Activated CD4-positive, alpha-beta T cell treated with anti-CD3 and anti-CD28 coated beads, Interleukin-2, amount 10 ng/mL, durations not matched to agents 24 days and 14 days (primary cell): ENCODE measurements at regions of chr7 and their contacts with region 1.

Region 1: DNA sequence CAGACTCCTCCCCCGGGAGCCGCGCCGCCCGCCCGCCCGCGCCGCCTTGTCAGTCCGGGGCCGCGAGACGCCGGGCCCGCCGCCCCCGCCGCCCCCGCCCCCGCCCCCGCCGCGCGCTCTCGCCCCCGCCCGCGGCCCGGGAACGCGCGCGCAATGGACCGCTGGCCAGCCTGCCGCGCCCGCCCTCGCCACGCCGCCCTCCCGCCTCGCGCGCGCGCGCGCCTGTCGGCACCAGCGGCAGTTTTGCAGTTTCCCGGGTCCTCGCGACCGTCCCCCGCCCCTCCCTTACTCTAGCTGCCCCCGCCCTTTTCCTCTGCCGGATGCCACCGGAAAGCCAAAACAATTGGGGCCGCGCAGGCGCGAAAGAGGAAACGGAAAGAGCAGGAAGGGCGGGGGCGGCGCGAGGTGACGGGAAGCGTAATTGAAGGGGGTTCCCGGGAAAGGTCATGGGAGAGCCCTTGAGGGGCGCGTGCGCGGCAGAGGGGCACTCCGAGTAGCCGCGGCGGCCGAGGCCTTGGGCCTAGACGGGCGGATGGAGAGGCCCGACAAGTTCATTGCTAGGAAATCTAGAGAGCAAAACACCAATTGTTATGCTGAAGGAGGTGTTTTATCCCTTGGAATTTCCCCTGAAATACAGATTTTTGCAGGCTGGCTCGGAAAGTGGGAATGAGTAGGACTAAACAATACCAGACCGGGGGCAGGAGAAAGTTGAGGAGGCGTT is 400 bp upstream of the KBTBD2 start:
- DNase-seq: peak; percentile 99
- H3K4me3 Mint-ChIP-seq: peak overlapping the region; percentile 93
- H3K27ac Mint-ChIP-seq: peak overlapping the region; percentile 99
- H3K4me1 Mint-ChIP-seq: peaks cover 51% of the 10 kb centered on the region
- H3K27me3 Mint-ChIP-seq: peaks cover 2% of the 10 kb centered on the region

Region 2: GRCh38 chr7:32142649-32143048 is 749.3 kb before region 1 on chr7:
- intact Hi-C with region 1: no loop called
- DNase-seq: no peak
- H3K4me3 Mint-ChIP-seq: no peak overlapping the region
- H3K27ac Mint-ChIP-seq: no peak overlapping the region
- H3K4me1 Mint-ChIP-seq: no peaks in the 10 kb centered on the region
- H3K27me3 Mint-ChIP-seq: no peaks in the 10 kb centered on the region

Region 3: GRCh38 chr7:32259931-32260596 is 631.9 kb before region 1 on chr7:
- intact Hi-C with region 1: no loop called
- DNase-seq: no peak
- H3K4me3 Mint-ChIP-seq: no peak overlapping the region
- H3K27ac Mint-ChIP-seq: no peak overlapping the region
- H3K4me1 Mint-ChIP-seq: no peaks in the 10 kb centered on the region
- H3K27me3 Mint-ChIP-seq: no peaks in the 10 kb centered on the region

Region 4: DNA sequence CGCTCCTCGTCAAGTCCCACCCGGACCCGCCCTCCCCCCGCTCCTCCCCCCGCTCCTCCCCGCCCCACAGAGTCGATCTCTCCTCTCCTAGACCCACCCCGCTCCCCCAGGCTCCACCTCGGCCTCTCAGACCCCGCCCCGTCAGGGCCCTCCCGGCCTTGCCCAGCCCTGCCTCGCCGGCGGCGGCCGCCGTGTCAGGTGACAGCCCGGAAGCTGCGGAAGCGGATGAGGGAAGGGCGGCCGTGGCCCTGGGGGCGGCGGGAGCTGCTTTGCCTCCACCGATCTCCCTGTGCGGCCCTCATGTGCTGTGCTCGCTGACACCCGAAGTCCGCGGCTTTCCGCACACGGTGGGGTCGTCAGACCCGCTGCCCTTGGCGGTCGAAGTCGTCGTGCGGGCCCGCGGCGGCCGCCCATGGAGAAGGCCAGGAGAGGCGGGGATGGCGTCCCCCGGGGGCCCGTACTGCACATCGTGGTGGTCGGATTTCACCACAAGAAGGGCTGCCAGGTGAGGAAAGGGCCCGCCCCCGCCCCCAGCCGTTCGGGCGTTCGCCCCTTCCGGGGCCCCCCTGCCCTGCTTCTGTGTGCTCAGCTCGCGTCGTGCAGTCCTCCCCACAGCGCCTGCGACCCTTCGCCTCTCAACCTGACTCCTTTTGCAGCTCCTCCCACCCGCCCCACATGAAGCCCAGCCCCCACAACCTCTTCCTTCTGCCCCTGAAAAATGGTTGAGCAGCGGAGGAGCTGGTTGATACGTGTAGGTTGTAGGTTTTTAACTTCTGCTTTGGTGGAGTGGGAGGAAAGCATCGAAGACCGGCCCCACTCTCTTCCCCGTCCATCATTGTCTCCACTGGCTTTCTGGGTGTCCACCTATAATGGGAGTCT is 396.4 kb before region 1 on chr7 and contains the start of gene AVL9:
- intact Hi-C with region 1: loop called (anchors 2 kb)
- DNase-seq: peak; percentile 100
- H3K4me3 Mint-ChIP-seq: peak within 1 kb of the TSS; percentile 86
- H3K27ac Mint-ChIP-seq: peak within 1 kb of the TSS; percentile 98
- H3K4me1 Mint-ChIP-seq: peaks cover 27% of the 10 kb centered on the region
- H3K27me3 Mint-ChIP-seq: no peaks in the 10 kb centered on the region
- total RNA-seq, gene AVL9: 44.6 and 49.1 TPM in 2 replicates

Region 5: DNA sequence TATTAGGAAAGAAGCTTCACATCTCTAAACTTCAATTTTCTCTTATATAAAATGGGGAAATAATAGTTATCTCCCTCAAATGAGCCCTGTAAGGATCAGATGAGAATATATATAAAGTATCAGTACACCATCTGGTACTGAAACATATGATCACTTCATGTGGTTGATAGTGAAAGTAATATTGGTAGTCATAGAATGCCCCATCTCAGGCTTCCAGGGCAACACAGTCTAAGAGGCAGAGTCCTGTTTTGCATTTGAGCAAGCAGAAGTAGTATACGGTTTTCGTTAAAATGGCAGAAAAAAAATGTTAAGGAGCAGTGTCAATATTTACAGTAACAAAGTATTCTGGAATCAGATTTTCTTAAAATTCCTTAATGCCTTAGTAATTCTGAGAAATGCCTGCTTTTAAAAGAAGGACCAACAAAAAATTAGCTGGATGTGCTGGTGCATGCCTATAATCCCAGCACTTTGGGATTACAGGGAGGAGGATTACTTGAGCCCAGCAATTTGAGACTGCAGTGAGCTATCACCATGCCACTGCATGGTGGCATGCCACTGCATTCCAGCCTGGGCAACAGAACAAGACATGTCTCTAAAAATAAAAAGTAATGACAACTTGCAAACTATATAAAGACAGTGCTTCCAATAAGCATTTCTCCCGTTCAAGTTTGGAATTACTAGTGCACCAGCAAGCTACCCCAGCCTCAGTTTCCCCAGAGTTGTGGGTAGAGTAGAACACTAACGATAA is 20.2 kb before region 1 on chr7:
- intact Hi-C with region 1: loop called (anchors 2 kb)
- DNase-seq: no peak
- H3K4me3 Mint-ChIP-seq: no peak overlapping the region
- H3K27ac Mint-ChIP-seq: no peak overlapping the region
- H3K4me1 Mint-ChIP-seq: peaks cover 19% of the 10 kb centered on the region
- H3K27me3 Mint-ChIP-seq: no peaks in the 10 kb centered on the region

Region 6: GRCh38 chr7:32914184-32914583 is 22.2 kb after region 1 on chr7:
- intact Hi-C with region 1: no loop called
- DNase-seq: no peak
- H3K4me3 Mint-ChIP-seq: no peak overlapping the region
- H3K27ac Mint-ChIP-seq: no peak overlapping the region
- H3K4me1 Mint-ChIP-seq: peaks cover 8% of the 10 kb centered on the region
- H3K27me3 Mint-ChIP-seq: no peaks in the 10 kb centered on the region

Region 7: DNA sequence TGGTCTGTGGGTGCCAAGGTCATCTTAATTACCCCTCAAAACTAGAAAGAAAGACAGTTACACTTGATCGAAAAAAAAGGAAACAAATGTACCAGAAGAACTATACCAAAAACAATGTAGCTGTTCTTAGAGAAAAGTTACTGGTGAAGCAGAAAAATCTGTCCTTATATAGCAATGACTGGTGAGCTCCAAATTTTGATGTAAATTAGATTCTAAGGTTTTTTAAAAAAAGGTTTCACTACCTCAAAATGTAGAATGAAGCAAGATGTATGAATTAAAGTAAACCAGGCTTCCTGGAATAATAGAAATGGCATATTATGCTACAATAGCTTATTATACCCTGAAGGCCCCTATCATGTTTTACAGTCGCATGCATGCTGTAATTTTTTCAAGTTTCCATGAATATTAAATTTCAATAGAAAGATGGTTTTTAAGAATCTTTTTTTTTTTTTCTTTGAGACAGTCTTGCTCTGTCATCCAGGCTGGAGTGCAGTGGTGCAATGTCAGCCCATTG is 36.9 kb after region 1 on chr7:
- intact Hi-C with region 1: no loop called
- DNase-seq: no peak
- H3K4me3 Mint-ChIP-seq: no peak overlapping the region
- H3K27ac Mint-ChIP-seq: no peak overlapping the region
- H3K4me1 Mint-ChIP-seq: no peaks in the 10 kb centered on the region
- H3K27me3 Mint-ChIP-seq: no peaks in the 10 kb centered on the region

Region 8: GRCh38 chr7:32942786-32943653 is 51.1 kb after region 1 on chr7:
- intact Hi-C with region 1: loop called (anchors 1 kb)
- DNase-seq: peak; percentile 91
- H3K4me3 Mint-ChIP-seq: peak overlapping the region; percentile 93
- H3K27ac Mint-ChIP-seq: peak overlapping the region; percentile 8
- H3K4me1 Mint-ChIP-seq: peaks cover 17% of the 10 kb centered on the region
- H3K27me3 Mint-ChIP-seq: peaks cover 8% of the 10 kb centered on the region

Region 9: GRCh38 chr7:33062782-33063443 is 171.0 kb after region 1 on chr7:
- intact Hi-C with region 1: loop called (anchors 1 kb)
- DNase-seq: peak; percentile 97
- H3K4me3 Mint-ChIP-seq: peak overlapping the region; percentile 97
- H3K27ac Mint-ChIP-seq: peak overlapping the region; percentile 93
- H3K4me1 Mint-ChIP-seq: peaks cover 30% of the 10 kb centered on the region
- H3K27me3 Mint-ChIP-seq: peaks cover 3% of the 10 kb centered on the region

Region 10: GRCh38 chr7:33128990-33129805 is 237.2 kb after region 1 on chr7 and contains the start of gene BBS9:
- intact Hi-C with region 1: loop called (anchors 1 kb)
- DNase-seq: peak; percentile 97
- H3K4me3 Mint-ChIP-seq: peak within 1 kb of the TSS; percentile 98
- H3K27ac Mint-ChIP-seq: peak within 1 kb of the TSS; percentile 91
- H3K4me1 Mint-ChIP-seq: peaks cover 15% of the 10 kb centered on the region
- H3K27me3 Mint-ChIP-seq: peaks cover 5% of the 10 kb centered on the region
- total RNA-seq, gene BBS9: 4.2 and 4.3 TPM in 2 replicates